Psoas muscle (tissue), 8 donors: ENCODE measurements at regions of chr12 and their contacts with region 1.

Region 1: GRCh38 chr12:85725991-85726390 is 110.2 kb downstream of the RASSF9 start:
- DNase-seq: no peak
- ATAC-seq: no peak
- H3K4me3 ChIP-seq: no peak overlapping the region
- H3K27ac ChIP-seq: no peak overlapping the region
- H3K4me1 ChIP-seq: no peaks in the 10 kb centered on the region
- H3K27me3 ChIP-seq: no peaks in the 10 kb centered on the region
- CTCF ChIP-seq: no peak

Region 2: DNA sequence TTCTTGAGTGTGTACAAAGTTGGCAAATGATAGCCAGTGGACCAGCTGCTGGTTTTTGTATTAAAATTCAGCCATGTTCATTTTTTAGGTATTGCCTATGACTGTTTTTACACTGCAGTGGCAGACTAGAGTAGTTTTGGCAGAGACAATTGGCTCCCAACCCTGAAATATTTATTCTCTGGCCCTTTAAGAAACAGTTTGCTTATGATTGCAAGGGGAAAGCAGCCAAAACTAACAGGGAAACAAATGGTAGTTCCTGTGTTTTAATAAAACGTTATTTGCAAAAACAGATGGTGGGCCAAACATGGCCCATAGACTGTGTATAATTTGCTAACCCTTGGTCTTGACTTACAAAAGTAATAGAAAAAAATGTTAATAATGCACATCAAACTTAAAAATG is 335.7 kb before region 1 on chr12:
- intact Hi-C with region 1: no loop called
- DNase-seq: no peak
- ATAC-seq: no peak
- H3K4me3 ChIP-seq: no peak overlapping the region
- H3K27ac ChIP-seq: no peak overlapping the region
- H3K4me1 ChIP-seq: no peaks in the 10 kb centered on the region
- H3K27me3 ChIP-seq: no peaks in the 10 kb centered on the region
- CTCF ChIP-seq: no peak

Region 3: GRCh38 chr12:85711735-85712390 is 14.1 kb before region 1 on chr12:
- intact Hi-C with region 1: loop called in 1 of 2 experiments (anchors 2 kb)
- DNase-seq: peak; percentile 37 to 66
- ATAC-seq: peak; percentile 39 to 88 (median 76)
- H3K4me3 ChIP-seq: no peak overlapping the region
- H3K27ac ChIP-seq: no peak overlapping the region
- H3K4me1 ChIP-seq: peaks cover 7% of the 10 kb centered on the region
- H3K27me3 ChIP-seq: no peaks in the 10 kb centered on the region
- CTCF ChIP-seq: no peak